Vagina (tissue), 2 donors: ENCODE measurements at regions of chr17 and their contacts with region 1.

Region 1: GRCh38 chr17:64938925-64939474 is 19.7 kb upstream of the LRRC37A3 start:
- DNase-seq: no peak
- H3K4me3 ChIP-seq: no peak overlapping the region
- H3K27ac ChIP-seq: no peak overlapping the region
- H3K4me1 ChIP-seq: no peaks in the 10 kb centered on the region
- H3K27me3 ChIP-seq: no peaks in the 10 kb centered on the region
- CTCF ChIP-seq: peak in 2 of 3 experiments; percentile 16 to 32
- POLR2A ChIP-seq: no peak

Region 2: GRCh38 chr17:64661976-64662773 is 276.8 kb before region 1 on chr17 and contains the start of gene SMURF2:
- intact Hi-C with region 1: no loop called
- DNase-seq: peak in 1 of 2 donors; percentile 90
- H3K4me3 ChIP-seq: peak within 1 kb of the TSS; percentile 70 to 88
- H3K27ac ChIP-seq: peak within 1 kb of the TSS; percentile 88
- H3K4me1 ChIP-seq: peaks cover 29% of the 10 kb centered on the region
- H3K27me3 ChIP-seq: no peaks in the 10 kb centered on the region
- CTCF ChIP-seq: no peak
- POLR2A ChIP-seq: peak in 1 of 2 donors; percentile 95
- total RNA-seq, gene SMURF2: 19.9 TPM

Region 3: DNA sequence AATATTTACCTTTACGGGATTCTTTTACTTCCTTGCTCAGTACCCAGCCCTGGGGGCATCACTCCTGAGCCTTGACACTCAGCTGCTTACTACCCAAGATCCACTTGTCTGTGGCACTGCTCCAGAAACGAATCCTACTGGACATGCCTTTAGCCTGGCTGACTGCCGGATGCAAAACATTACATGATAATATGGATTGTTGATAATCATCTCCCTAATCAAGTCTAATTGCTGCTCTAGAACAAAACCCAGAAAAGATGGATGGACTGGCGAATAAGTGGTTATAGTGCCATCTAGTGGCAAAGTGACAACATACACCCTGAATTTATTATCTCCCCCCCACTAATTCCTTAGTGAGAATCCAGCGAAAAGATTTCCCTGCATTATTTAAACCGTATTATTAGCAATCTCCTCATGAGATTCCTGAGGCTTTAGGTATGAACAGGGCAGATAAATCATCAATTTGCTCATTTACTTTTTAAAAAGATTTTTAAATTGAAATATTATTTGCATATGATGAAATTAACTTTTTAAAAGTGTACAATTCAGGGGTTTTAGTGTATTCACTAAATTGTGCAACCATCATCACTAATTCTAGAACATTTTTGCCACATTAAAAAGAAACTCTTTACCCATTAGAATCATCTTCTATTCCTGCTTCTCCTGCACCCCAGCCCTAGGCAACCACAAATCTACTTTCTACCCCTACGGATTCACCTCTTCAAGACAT is 259.8 kb after region 1 on chr17:
- intact Hi-C with region 1: loop called (anchors 10 kb)
- DNase-seq: no peak
- H3K4me3 ChIP-seq: no peak overlapping the region
- H3K27ac ChIP-seq: no peak overlapping the region
- H3K4me1 ChIP-seq: no peaks in the 10 kb centered on the region
- H3K27me3 ChIP-seq: no peaks in the 10 kb centered on the region
- CTCF ChIP-seq: peak; percentile 51 to 79 (median 74)
- POLR2A ChIP-seq: no peak